MCF 10A (cell line): ENCODE measurements at regions of chr9 and their contacts with region 1.

Region 1: DNA sequence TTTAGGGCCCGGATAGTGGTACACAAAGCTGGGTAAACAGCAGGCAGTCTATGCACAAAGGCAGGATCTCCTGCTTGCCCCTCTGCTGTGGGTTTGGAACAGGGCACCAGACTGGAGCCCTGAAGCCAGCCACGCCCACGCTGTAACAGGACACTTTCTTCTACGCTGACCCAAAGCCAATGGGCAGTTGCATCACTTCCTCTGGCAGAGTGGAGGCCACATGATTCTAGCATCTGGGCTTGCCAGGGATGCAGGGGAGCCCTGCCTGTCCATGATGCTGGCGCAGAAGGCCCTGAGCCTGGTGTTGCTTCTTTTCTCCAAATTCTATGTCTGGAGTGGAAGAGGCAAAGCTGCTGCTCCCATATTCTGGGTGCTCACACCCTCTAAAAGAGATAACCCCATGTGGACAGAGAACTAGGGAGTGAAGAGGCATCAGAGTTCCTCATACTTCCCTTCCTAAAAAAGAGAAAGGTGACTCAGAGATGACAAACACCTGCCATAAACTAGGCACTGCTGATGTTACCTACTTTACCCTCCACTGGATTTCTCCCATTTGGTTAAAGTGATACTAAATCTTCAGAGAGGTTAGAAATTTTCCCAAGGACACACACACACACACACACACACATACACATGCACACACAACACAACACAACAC is 260.3 kb upstream of the KLF4 start:
- DNase-seq: peak; percentile 98
- H3K4me3 Mint-ChIP-seq: no peak overlapping the region
- H3K27ac Mint-ChIP-seq: peak overlapping the region; percentile 43
- H3K4me1 Mint-ChIP-seq: peaks cover 38% of the 10 kb centered on the region
- H3K27me3 Mint-ChIP-seq: no peaks in the 10 kb centered on the region
- CTCF ChIP-seq: no peak

Region 2: DNA sequence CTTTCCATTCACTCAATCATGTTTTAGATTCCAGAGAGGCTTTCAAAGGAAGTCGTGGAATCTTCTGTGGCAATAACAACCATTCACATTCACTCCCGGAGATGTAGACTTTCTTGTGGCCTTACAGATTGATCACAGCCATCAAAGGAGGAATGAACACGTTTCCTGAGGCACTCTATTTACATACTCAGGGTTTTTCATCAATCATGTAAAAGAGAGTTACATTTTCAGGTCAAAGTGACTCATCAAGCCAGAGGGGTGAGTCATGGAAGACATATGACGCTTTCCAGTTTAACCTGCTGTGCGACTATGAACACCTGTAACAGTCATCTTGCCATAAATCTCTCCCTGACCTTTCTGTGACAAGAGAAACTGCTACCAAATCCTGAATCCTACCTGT is 506.2 kb before region 1 on chr9:
- CTCF ChIA-PET with region 1: no interaction called
- POLR2A ChIA-PET with region 1: no interaction called
- intact Hi-C with region 1: no loop called
- DNase-seq: peak; percentile 87
- H3K4me3 Mint-ChIP-seq: no peak overlapping the region
- H3K27ac Mint-ChIP-seq: peak overlapping the region; percentile 38
- H3K4me1 Mint-ChIP-seq: peaks cover 24% of the 10 kb centered on the region
- H3K27me3 Mint-ChIP-seq: no peaks in the 10 kb centered on the region
- CTCF ChIP-seq: no peak

Region 3: GRCh38 chr9:107332883-107333282 is 417.0 kb before region 1 on chr9:
- CTCF ChIA-PET with region 1: no interaction called
- POLR2A ChIA-PET with region 1: no interaction called
- intact Hi-C with region 1: no loop called
- DNase-seq: no peak
- H3K4me3 Mint-ChIP-seq: no peak overlapping the region
- H3K27ac Mint-ChIP-seq: peak overlapping the region; percentile 53
- H3K4me1 Mint-ChIP-seq: peaks cover 11% of the 10 kb centered on the region
- H3K27me3 Mint-ChIP-seq: no peaks in the 10 kb centered on the region
- CTCF ChIP-seq: no peak

Region 4: GRCh38 chr9:107536462-107536861 is 213.5 kb before region 1 on chr9:
- CTCF ChIA-PET with region 1: no interaction called
- POLR2A ChIA-PET with region 1: no interaction called
- intact Hi-C with region 1: no loop called
- DNase-seq: no peak
- H3K4me3 Mint-ChIP-seq: no peak overlapping the region
- H3K27ac Mint-ChIP-seq: no peak overlapping the region
- H3K4me1 Mint-ChIP-seq: peaks cover 15% of the 10 kb centered on the region
- H3K27me3 Mint-ChIP-seq: no peaks in the 10 kb centered on the region
- CTCF ChIP-seq: no peak

Region 5: GRCh38 chr9:107548048-107548800 is 201.7 kb before region 1 on chr9:
- CTCF ChIA-PET with region 1: no interaction called
- POLR2A ChIA-PET with region 1: no interaction called
- intact Hi-C with region 1: loop called (anchors 5 kb)
- DNase-seq: peak; percentile 93
- H3K4me3 Mint-ChIP-seq: peak overlapping the region; percentile 58
- H3K27ac Mint-ChIP-seq: peak overlapping the region; percentile 90
- H3K4me1 Mint-ChIP-seq: peaks cover 20% of the 10 kb centered on the region
- H3K27me3 Mint-ChIP-seq: no peaks in the 10 kb centered on the region
- CTCF ChIP-seq: no peak

Region 6: DNA sequence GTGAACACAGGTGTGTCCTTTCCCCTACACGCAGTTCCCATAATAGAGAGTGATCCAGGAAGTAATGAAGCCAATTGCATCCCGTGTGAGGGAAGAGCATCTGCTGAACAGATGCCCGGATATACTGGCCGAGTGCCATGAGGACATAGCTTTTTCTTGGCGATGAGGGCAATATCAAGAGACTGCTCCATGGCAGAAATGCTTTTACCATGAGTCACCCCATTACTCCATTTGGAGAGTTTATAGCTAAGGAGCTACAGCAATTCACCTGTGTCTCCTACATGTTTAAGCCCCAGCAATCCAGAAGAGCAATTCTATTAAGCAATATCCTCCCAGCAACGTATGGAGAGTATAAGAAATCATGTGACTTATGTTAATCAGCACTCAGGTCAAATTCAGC is 38.4 kb before region 1 on chr9:
- CTCF ChIA-PET with region 1: interaction called, 6 read pairs
- POLR2A ChIA-PET with region 1: interaction called, 22 read pairs
- intact Hi-C with region 1: no loop called
- DNase-seq: peak; percentile 98
- H3K4me3 Mint-ChIP-seq: no peak overlapping the region
- H3K27ac Mint-ChIP-seq: peak overlapping the region; percentile 86
- H3K4me1 Mint-ChIP-seq: peaks cover 43% of the 10 kb centered on the region
- H3K27me3 Mint-ChIP-seq: no peaks in the 10 kb centered on the region
- CTCF ChIP-seq: no peak

Region 7: DNA sequence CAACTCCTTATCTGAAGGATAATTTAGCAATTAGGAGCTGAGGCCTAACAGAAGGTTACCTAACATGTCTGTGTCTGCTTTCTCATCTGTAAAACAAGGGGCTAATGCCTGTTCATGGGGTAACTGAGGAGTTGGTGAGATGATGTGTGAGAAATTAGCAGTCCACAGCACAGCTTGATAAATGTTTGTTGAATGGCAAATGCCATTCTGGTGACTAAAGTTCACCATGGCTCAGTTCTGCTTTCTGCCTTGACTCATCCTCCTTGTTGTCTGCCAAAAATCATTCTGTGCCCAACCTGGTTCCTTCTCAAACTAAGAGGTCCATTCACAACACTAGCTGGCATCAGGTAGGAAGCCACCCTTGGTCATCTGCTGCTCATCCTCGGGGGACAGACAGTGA is 291.6 kb after region 1 on chr9:
- CTCF ChIA-PET with region 1: interaction called, 5 read pairs
- POLR2A ChIA-PET with region 1: interaction called, 14 read pairs
- intact Hi-C with region 1: no loop called
- DNase-seq: peak; percentile 89
- H3K4me3 Mint-ChIP-seq: peak overlapping the region; percentile 54
- H3K27ac Mint-ChIP-seq: peak overlapping the region; percentile 89
- H3K4me1 Mint-ChIP-seq: peaks cover 50% of the 10 kb centered on the region
- H3K27me3 Mint-ChIP-seq: no peaks in the 10 kb centered on the region
- CTCF ChIP-seq: no peak

Region 8: DNA sequence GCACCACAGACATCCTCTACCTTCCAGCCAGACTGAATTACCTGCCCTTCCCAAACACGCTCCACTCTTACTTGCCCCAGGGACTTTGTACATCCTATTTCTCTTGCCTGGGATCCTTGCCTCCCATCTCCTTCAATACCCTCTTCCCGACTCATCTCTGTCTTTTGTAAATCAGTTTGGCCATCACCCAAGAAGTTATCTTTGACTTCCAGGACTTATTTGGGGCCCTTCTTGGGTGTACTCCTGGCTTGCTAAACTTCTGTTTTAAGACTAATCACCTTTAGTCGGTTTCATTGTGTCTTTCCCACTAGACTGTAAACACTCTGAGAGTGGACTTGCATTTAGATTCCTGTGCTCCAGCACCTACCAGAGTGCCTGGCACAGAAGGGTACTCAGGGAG is 560.3 kb after region 1 on chr9:
- CTCF ChIA-PET with region 1: no interaction called
- POLR2A ChIA-PET with region 1: no interaction called
- intact Hi-C with region 1: no loop called
- DNase-seq: no peak
- H3K4me3 Mint-ChIP-seq: no peak overlapping the region
- H3K27ac Mint-ChIP-seq: no peak overlapping the region
- H3K4me1 Mint-ChIP-seq: no peaks in the 10 kb centered on the region
- H3K27me3 Mint-ChIP-seq: no peaks in the 10 kb centered on the region
- CTCF ChIP-seq: no peak